ENCODE measurements at regions of chr12 and their contacts with region 1.

Region 1: GRCh38 chr12:449203-449602 is 10.5 kb upstream of the B4GALNT3 start:
- DNase-seq: no peak
- H3K4me3 ChIP-seq: no peak overlapping the region
- H3K27ac ChIP-seq: no peak overlapping the region
- H3K4me1 ChIP-seq: no peaks in the 10 kb centered on the region
- H3K27me3 ChIP-seq: peaks cover 30% of the 10 kb centered on the region

Region 2: GRCh38 chr12:553205-554000 is 104.2 kb after region 1 on chr12:
- in situ Hi-C with region 1: loop called (anchors 5 kb)
- DNase-seq: no peak
- H3K4me3 ChIP-seq: no peak overlapping the region
- H3K27ac ChIP-seq: no peak overlapping the region
- H3K4me1 ChIP-seq: no peaks in the 10 kb centered on the region
- H3K27me3 ChIP-seq: peaks cover 26% of the 10 kb centered on the region

Measured in GM23248 (cell line).